Activated CD4-positive, alpha-beta T cell treated with anti-CD3 and anti-CD28 coated beads, Interleukin-2, amount 10 ng/mL, durations not matched to agents 24 days and 14 days (primary cell): ENCODE measurements at regions of chr3 and their contacts with region 1.

Region 1: DNA sequence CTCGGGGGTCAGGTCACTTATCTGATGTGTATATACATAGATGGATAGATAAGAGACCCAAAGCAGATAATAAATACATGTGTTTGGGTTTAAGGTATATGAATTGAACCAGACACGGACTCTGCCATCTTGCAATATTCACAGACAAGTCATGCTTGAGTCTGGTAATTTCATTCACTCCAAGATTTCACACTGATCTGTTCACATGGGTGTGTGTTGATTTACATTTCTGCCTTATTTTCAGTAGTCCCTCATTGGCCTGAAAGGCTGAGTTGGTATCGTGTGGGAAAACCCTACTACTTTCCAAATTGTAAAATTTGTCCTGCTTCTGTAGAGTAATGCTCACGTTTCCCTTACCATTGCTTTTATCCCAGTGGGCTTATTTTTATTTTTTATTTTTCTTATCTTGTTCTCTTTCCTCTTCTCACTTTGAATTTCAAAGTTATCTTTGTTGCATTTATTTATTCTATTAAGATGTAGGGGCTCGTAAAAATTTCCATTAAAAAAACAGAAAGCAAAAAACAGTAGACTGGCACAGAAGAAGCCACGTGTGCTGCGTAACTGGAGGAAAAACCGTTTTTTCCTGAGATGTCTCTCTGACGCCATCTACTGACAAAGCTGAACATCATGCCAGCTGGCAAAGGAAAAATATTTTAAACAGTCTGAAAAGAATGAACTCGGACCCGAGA is 10.8 kb upstream of the MFSD1 start:
- DNase-seq: peak; percentile 81
- H3K4me3 Mint-ChIP-seq: peak overlapping the region; percentile 51
- H3K27ac Mint-ChIP-seq: peak overlapping the region; percentile 20
- H3K4me1 Mint-ChIP-seq: peaks cover 2% of the 10 kb centered on the region
- H3K27me3 Mint-ChIP-seq: peaks cover 8% of the 10 kb centered on the region

Region 2: DNA sequence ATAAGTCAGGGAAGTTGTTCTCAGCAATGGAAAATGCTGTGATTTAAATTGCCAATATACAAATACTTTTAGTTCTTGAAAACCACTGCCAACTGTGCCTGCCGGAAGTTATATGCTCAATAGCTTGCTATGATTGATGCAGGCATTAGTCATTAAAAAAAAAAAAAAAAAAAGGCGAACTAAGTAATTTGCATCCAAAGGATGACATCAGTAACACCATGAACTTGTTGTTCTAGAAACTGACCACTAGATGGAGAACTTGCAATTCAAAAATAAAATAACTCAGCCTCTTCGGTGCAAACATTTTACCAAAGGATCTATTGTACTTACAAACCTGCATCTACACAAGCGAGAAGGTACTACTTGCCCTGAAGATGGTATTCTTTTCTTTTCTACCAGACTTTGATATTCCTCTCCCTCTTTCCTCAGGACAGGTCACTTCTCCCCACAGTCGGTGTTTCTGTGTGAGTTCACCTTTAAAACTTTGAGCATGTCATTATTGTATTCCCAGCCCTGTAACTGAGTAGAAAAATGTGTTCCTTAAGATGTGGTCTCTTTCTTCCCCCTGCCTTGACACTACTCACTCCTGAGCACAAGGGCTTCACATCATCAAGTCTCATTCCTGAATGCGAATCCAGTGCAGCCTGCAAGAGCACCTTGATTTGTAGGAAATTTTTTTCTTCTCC is 1172.8 kb before region 1 on chr3:
- intact Hi-C with region 1: loop called (anchors 5 kb)
- DNase-seq: no peak
- H3K4me3 Mint-ChIP-seq: no peak overlapping the region
- H3K27ac Mint-ChIP-seq: no peak overlapping the region
- H3K4me1 Mint-ChIP-seq: peaks cover 2% of the 10 kb centered on the region
- H3K27me3 Mint-ChIP-seq: peaks cover 4% of the 10 kb centered on the region

Region 3: GRCh38 chr3:158539414-158540014 is 251.5 kb before region 1 on chr3:
- intact Hi-C with region 1: loop called (anchors 1 kb)
- DNase-seq: peak; percentile 79
- H3K4me3 Mint-ChIP-seq: no peak overlapping the region
- H3K27ac Mint-ChIP-seq: no peak overlapping the region
- H3K4me1 Mint-ChIP-seq: no peaks in the 10 kb centered on the region
- H3K27me3 Mint-ChIP-seq: no peaks in the 10 kb centered on the region

Region 4: GRCh38 chr3:158659454-158660237 is 131.4 kb before region 1 on chr3:
- intact Hi-C with region 1: loop called (anchors 1 kb)
- DNase-seq: peak; percentile 86
- H3K4me3 Mint-ChIP-seq: no peak overlapping the region
- H3K27ac Mint-ChIP-seq: no peak overlapping the region
- H3K4me1 Mint-ChIP-seq: peaks cover 6% of the 10 kb centered on the region
- H3K27me3 Mint-ChIP-seq: no peaks in the 10 kb centered on the region

Region 5: DNA sequence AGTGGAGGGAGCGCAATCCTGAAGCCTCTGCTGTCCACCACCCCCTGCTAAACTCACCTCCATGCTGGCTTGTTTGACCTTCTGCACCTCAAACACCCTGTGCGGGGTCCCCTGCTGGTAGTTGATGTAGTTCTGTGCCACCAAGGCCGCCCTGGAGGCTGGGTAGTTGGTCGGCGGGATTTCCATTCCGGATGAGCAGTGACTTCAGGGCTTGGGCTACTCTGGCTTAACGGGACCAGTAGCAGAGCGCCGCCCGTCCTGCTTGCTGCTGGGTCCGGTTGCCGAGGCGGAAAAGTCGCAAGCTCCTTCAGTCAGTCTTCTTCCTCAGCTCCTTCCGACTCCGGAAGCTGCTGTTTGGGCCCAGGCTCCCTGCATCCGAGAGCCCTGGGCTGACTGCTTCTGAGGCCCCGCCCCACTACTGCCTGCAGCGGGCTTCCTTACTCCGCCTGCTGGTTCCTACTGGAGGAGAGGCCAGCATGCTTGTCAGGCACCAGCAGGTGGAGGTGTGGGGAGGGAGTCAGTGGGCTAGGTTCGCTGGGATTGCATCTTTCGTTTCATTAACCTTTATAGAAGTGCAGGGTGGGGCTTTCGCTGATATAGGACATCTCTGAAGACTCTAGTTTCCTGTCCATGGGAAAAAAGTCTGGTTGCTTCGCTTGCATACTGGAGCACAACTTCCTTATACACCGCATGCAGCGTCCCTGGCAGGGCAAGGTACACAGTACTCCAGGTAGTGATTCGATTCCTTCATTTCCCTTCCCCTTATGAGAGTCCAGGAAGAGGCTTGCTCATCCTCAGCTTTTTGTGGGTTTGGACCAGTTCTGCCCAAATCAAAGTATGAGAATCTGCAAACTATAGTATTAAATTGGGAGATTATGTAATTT is 118.5 kb before region 1 on chr3 and contains the start of gene LXN:
- intact Hi-C with region 1: loop called (anchors 1 kb)
- DNase-seq: peak; percentile 94
- H3K4me3 Mint-ChIP-seq: peak within 1 kb of the TSS; percentile 96
- H3K27ac Mint-ChIP-seq: peak within 1 kb of the TSS; percentile 95
- H3K4me1 Mint-ChIP-seq: peaks cover 24% of the 10 kb centered on the region
- H3K27me3 Mint-ChIP-seq: no peaks in the 10 kb centered on the region
- total RNA-seq, gene LXN: 15.1 and 16.2 TPM in 2 replicates

Region 6: GRCh38 chr3:158727206-158728060 is 63.6 kb before region 1 on chr3:
- intact Hi-C with region 1: loop called (anchors 1 kb)
- DNase-seq: peak; percentile 86
- H3K4me3 Mint-ChIP-seq: peak overlapping the region; percentile 50
- H3K27ac Mint-ChIP-seq: no peak overlapping the region
- H3K4me1 Mint-ChIP-seq: peaks cover 34% of the 10 kb centered on the region
- H3K27me3 Mint-ChIP-seq: no peaks in the 10 kb centered on the region

Region 7: GRCh38 chr3:158801696-158802408 is 10.8 kb after region 1 on chr3 and contains the start of gene MFSD1:
- intact Hi-C with region 1: loop called (anchors 1 kb)
- DNase-seq: peak; percentile 97
- H3K4me3 Mint-ChIP-seq: peak within 1 kb of the TSS; percentile 88
- H3K27ac Mint-ChIP-seq: peak within 1 kb of the TSS; percentile 86
- H3K4me1 Mint-ChIP-seq: peaks cover 15% of the 10 kb centered on the region
- H3K27me3 Mint-ChIP-seq: peaks cover 15% of the 10 kb centered on the region
- total RNA-seq, gene MFSD1: 20.4 and 23.2 TPM in 2 replicates